Calu3 (cell line): ENCODE measurements at regions of chr5 and their contacts with region 1.

Region 1: DNA sequence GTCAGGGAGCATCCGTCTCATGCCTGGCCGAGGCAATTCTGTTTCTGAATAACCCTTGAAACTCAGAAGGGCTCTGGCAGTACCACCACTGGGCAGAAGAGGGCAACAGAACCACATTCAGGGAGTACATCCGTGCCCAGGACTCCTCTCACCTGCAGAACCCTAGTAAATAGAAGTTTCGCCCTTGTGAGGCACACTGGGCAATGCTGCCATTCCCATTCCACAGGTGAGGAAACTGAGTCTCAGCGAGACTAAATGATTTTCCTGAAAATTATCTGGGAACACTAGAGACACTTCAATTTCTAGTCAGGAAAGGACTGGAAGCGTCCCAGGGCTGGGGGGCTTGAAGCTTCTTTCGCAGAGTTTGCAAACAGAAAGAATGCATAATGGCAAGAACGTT is 74.7 kb downstream of the FGF1 start:
- DNase-seq: peak; percentile 88
- H3K4me3 Mint-ChIP-seq: no peak overlapping the region
- H3K27ac Mint-ChIP-seq: no peak overlapping the region
- H3K4me1 Mint-ChIP-seq: peaks cover 16% of the 10 kb centered on the region
- H3K27me3 Mint-ChIP-seq: peaks cover 39% of the 10 kb centered on the region
- CTCF ChIP-seq: peak; percentile 94

Region 2: DNA sequence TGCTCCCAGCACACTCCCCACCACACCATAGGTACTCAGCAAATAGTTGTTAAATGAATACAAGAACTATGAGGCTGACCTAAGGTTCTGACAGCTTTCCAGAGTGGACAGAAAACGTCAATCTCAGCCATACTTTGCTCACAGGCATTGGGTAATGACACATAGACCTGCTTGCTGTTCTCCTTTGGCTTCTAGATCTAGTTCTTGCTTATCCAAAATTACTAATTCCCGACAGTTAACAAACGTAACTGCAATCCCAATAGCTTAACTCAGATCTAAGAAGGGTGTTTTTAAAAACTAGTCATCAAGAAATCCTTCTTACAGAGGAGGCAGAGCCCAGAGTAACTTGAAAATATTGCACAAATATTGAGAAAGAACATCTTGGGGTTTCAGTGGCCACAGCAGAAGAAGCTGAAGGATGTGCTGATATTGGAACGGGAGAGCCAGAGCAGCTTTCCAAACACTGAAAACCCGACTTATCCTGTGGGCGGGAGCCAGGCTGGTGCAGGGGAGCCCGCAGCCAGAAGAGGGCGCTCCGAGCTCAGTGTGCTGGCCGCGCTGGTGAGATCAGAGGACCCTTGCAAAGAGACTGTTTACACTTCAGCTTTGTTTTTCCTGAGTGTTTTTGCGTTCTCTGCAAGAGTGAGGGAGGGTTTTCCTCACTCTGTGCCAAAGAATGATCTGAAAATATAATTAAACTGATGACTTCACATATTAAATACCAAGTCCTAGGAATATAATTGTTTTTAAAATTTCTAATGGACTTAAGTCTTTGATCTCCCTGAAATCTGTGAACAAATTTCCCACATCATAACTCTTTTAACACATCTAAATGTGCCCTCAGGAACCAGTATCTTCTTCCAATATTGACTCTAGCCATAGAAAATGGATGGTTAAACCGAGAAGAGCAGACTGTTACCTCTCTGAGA is 44.4 kb after region 1 on chr5:
- CTCF ChIA-PET with region 1: interaction called, 6 read pairs
- intact Hi-C with region 1: loop called (anchors 1 kb)
- DNase-seq: peak; percentile 90
- H3K4me3 Mint-ChIP-seq: no peak overlapping the region
- H3K27ac Mint-ChIP-seq: no peak overlapping the region
- H3K4me1 Mint-ChIP-seq: no peaks in the 10 kb centered on the region
- H3K27me3 Mint-ChIP-seq: peaks cover 38% of the 10 kb centered on the region
- CTCF ChIP-seq: peak; percentile 97

Region 3: DNA sequence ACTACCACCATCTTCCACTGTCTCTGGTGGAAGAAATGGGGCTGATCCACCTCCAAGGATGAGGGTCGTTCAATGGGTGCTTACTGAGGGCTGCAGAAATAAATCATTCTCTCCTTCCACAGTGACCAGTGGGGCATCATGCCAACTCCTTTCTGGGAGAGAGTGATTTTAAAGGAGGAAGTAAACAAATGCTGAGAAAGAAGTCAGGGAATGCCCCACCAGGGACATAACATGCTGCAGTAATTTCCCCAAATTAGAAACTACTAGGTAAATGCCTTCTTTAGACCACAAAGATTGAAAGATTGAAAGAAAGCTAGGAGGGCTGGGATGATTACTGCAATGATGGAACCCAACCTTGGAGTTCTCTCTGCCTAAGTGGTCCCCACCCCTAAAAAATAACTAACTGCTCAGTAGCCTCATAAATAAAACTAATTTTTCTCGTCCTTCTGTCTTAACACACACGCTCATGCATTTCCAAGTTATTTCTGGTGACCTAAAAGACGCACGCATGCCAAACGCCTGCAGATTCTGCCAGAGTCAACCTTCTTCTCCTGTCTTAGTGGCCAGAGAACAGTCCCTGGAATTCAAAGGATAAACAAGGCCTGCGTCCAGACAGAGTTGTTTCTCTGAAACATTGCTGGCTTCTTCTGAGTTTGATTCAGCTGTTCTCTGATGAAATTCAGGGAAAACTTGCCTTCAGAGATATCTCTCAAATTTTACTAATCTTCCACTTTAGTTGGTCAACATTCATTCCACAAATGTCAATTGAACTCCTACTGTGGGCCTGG is 542.4 kb after region 1 on chr5:
- CTCF ChIA-PET with region 1: no interaction called
- intact Hi-C with region 1: no loop called
- DNase-seq: peak; percentile 28
- H3K4me3 Mint-ChIP-seq: no peak overlapping the region
- H3K27ac Mint-ChIP-seq: no peak overlapping the region
- H3K4me1 Mint-ChIP-seq: peaks cover 17% of the 10 kb centered on the region
- H3K27me3 Mint-ChIP-seq: no peaks in the 10 kb centered on the region
- CTCF ChIP-seq: no peak